Activated CD4-positive, alpha-beta T cell treated with anti-CD3 and anti-CD28 coated beads for 36 hours (primary cell): ENCODE measurements at regions of chr13 and their contacts with region 1.

Region 1: GRCh38 chr13:97359181-97360057 is 74.5 kb upstream of the RAP2A start:
- DNase-seq: peak; percentile 58
- ATAC-seq: peak; percentile 90
- H3K4me3 Mint-ChIP-seq: no peak overlapping the region
- H3K27ac Mint-ChIP-seq: no peak overlapping the region
- H3K4me1 Mint-ChIP-seq: no peaks in the 10 kb centered on the region
- H3K27me3 Mint-ChIP-seq: no peaks in the 10 kb centered on the region

Region 2: DNA sequence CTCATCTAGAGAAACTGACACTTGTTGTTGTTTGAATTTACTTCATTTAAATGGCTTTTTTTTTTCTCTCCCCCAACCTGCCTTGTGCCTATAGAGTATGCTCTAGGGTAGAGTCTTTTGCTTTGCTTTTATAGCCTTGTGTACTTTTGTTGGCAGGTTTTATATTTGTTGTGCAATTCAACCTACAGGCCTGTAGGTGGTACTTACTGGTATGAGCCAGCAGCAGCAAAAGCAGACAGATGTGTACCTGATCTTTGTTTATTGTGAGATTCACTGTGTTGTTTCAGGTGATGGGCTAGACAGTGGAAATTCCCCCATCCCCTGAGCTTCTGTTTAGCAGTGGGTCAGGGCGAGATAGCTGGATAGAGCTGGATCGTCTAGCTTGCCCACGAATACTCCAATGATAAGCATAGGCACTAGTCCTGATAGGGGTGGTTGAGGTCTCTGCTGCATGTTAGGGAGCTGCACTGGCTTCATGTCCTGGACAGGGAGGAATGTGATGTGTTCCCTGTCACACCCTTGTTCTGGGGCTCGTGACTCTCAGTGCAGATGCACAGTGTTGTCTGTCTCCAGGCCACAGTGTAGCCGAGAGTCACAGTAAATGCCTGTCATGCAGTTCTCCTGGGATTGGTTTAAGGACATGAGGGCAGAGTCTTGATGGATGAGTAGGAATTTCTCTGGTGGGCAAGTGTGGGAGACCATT is 1661.2 kb before region 1 on chr13:
- CTCF ChIA-PET with region 1: no interaction called
- POLR2A ChIA-PET with region 1: no interaction called
- intact Hi-C with region 1: no loop called
- DNase-seq: no peak
- ATAC-seq: peak; percentile 51
- H3K4me3 Mint-ChIP-seq: no peak overlapping the region
- H3K27ac Mint-ChIP-seq: peak overlapping the region; percentile 27
- H3K4me1 Mint-ChIP-seq: peaks cover 49% of the 10 kb centered on the region
- H3K27me3 Mint-ChIP-seq: no peaks in the 10 kb centered on the region

Region 3: DNA sequence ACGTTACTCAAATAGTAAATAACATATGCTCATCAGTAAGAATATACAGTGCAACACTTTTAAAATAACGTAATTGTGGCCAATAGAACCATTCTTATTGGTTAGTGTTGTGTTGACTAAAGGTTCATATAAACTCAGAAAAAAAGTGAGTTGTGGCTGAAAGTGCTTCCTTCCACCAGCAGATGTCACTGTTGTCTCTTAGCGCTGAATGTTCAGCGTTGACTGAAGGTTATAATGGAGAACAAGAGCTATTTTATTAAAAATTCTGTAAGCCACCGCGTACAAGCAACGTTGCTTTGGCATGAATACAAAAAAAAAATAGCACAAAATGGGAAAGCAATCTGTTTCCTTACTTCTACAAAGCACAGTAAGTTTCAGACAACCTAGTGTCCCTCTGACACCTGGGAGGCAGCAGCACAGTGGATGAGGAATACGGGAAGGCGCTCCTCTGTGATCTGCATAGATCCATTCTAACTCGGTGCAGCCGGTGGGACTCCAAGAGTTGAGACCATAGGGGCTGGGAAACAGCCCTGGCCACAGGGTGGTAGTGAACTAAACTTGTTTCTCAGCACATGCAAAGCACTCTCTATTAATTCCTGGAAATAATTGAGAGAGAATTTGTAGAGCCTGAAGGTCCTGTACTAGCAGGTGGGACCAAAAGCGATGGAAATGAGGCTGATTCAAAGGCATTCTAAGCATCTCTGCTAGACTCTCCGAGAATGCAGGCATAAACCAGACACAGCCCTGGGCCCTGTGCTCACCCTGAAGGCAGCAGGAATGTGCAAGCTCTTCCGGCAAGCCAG is 341.2 kb before region 1 on chr13:
- CTCF ChIA-PET with region 1: interaction called, 4 read pairs
- POLR2A ChIA-PET with region 1: no interaction called
- intact Hi-C with region 1: loop called (anchors 1 to 2 kb)
- DNase-seq: peak; percentile 50
- ATAC-seq: peak; percentile 68
- H3K4me3 Mint-ChIP-seq: no peak overlapping the region
- H3K27ac Mint-ChIP-seq: no peak overlapping the region
- H3K4me1 Mint-ChIP-seq: peaks cover 7% of the 10 kb centered on the region
- H3K27me3 Mint-ChIP-seq: peaks cover 41% of the 10 kb centered on the region

Region 4: GRCh38 chr13:97030705-97031452 is 328.5 kb before region 1 on chr13:
- CTCF ChIA-PET with region 1: no interaction called
- POLR2A ChIA-PET with region 1: no interaction called
- intact Hi-C with region 1: loop called in 1 of 2 experiments (anchors 5 kb)
- DNase-seq: no peak
- ATAC-seq: no peak
- H3K4me3 Mint-ChIP-seq: no peak overlapping the region
- H3K27ac Mint-ChIP-seq: no peak overlapping the region
- H3K4me1 Mint-ChIP-seq: no peaks in the 10 kb centered on the region
- H3K27me3 Mint-ChIP-seq: peaks cover 16% of the 10 kb centered on the region

Region 5: DNA sequence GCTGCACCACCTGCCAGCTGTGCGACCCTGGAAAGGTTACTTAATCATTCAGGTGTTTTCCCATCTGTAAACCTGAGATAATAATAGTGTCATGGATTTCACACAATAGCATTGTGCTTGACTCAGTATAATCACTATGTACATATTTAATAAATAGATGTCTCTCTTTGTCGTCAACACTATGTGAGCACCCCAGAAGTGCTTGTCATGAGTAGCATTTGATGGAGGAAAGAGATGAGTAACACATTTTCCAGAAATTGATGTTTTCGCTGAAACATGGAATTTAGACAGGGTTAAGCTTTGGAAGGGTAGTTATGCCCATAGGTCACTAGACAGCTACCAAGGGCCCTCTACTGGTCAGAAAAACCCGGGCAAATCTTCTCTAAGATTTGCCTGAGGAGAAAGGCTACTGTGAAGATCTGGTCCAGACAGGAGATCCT is 146.8 kb before region 1 on chr13:
- CTCF ChIA-PET with region 1: no interaction called
- POLR2A ChIA-PET with region 1: no interaction called
- intact Hi-C with region 1: no loop called
- DNase-seq: no peak
- ATAC-seq: peak; percentile 30
- H3K4me3 Mint-ChIP-seq: no peak overlapping the region
- H3K27ac Mint-ChIP-seq: no peak overlapping the region
- H3K4me1 Mint-ChIP-seq: peaks cover 48% of the 10 kb centered on the region
- H3K27me3 Mint-ChIP-seq: no peaks in the 10 kb centered on the region

Region 6: GRCh38 chr13:97344265-97345175 is 14.9 kb before region 1 on chr13:
- CTCF ChIA-PET with region 1: interaction called, 25 read pairs
- POLR2A ChIA-PET with region 1: no interaction called
- intact Hi-C with region 1: no loop called
- DNase-seq: peak; percentile 73
- ATAC-seq: peak; percentile 80
- H3K4me3 Mint-ChIP-seq: no peak overlapping the region
- H3K27ac Mint-ChIP-seq: no peak overlapping the region
- H3K4me1 Mint-ChIP-seq: peaks cover 8% of the 10 kb centered on the region
- H3K27me3 Mint-ChIP-seq: no peaks in the 10 kb centered on the region

Region 7: DNA sequence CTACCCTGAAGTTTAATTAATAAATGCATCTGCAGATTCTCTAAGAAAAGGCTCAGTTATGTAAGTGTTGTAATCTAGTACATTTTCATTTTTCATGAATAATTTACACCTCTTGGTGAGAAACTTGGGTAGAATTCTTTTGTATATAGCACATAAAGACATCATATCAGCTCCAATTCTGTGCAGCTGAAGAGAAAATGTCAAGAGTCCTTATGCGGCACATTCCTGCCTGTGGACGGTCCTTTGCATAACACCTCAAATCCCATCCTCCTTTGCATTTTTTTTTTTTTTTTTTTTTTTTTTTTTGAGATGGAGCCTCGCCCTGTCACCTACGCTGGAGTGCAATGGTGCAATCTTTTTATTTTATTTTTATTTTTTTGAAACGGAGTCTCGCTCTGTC is 14.4 kb after region 1 on chr13:
- CTCF ChIA-PET with region 1: interaction called, 35 read pairs
- POLR2A ChIA-PET with region 1: no interaction called
- intact Hi-C with region 1: no loop called
- DNase-seq: no peak
- ATAC-seq: no peak
- H3K4me3 Mint-ChIP-seq: no peak overlapping the region
- H3K27ac Mint-ChIP-seq: no peak overlapping the region
- H3K4me1 Mint-ChIP-seq: peaks cover 8% of the 10 kb centered on the region
- H3K27me3 Mint-ChIP-seq: no peaks in the 10 kb centered on the region